Panc1 (cell line): ENCODE measurements at regions of chr19 and their contacts with region 1.

Region 1: DNA sequence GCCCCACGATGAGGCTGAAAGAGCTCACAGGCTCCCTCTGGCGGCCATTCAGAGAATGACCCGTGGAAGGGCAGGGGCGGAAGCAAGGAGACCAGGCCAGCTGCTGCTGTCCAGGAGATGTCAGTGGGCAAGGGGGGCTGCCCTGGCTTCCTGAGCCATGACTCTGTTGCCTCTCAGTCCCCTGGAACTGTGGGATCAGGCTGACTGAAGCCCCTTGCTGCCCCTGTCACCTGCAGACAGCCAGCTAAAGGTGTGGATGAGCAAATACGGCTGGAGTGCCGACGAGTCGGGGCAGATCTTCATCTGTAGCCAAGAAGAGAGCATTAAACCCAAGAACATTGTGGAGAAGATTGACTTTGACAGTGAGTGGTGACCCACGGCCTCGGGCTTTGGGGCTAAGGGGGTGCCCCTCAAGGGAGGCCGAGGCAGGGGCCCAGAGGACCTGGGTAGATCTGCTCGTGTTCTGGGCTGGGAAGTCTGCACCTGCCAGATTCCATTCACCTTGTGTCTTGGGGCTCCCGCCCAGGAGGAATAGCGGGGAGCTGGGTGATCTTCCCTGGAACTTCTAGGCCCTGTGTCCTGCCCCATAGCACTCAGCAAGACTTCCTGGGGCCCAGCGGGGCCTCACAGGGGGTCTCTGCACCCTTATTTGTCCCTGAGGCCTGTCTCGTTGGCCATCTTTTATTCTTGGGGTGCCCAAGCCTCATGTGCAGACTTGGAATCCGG is 12.5 kb upstream of the ACTN4 start:
- DNase-seq: no peak
- ATAC-seq: peak; percentile 73
- H3K4me3 ChIP-seq: no peak overlapping the region
- H3K27ac ChIP-seq: no peak overlapping the region
- H3K4me1 ChIP-seq: peaks cover 4% of the 10 kb centered on the region; the same call in 1 of the 2 replicates
- H3K27me3 ChIP-seq: no peaks in the 10 kb centered on the region
- CTCF ChIP-seq: no peak

Region 2: DNA sequence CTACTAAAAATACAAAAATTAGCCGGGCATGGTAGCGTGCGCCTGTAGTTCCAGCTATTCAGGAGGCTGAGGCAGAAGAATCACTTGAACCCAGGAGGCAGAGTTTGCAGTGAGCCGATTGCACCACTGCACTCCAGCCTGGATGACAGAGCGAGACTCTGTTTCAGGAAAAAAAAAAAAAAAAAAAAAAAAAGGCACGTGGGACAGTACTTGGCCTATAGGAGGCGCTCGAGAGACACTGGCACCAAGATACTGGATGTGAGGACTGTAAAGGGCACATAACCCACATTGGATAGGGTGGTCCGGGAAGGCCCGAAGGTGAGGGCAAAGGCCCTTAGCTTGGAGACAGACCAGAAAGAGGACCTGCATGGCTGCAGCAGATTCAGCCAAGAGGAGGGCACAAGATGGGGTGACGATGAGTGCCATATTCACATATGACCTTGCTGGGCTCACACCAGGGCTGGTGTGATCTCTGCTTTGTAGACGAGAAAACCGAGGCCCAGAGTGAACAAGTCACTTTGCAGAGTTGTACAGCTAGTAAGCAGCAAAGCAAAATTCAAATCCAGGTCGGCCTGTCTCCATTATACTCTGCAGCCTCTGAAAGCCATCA is 500.3 kb before region 1 on chr19:
- CTCF ChIA-PET with region 1: no interaction called
- POLR2A ChIA-PET with region 1: no interaction called
- in situ Hi-C with region 1: no loop called
- intact Hi-C with region 1: no loop called
- DNase-seq: peak; percentile 25
- ATAC-seq: peak; percentile 38; the same call in 1 of the 2 replicates
- H3K4me3 ChIP-seq: no peak overlapping the region
- H3K27ac ChIP-seq: no peak overlapping the region
- H3K4me1 ChIP-seq: no peaks in the 10 kb centered on the region
- H3K27me3 ChIP-seq: no peaks in the 10 kb centered on the region
- CTCF ChIP-seq: peak; percentile 96

Region 3: GRCh38 chr19:38506723-38507550 is 128.0 kb before region 1 on chr19:
- CTCF ChIA-PET with region 1: interaction called, 12 read pairs
- POLR2A ChIA-PET with region 1: interaction called, 3 read pairs
- in situ Hi-C with region 1: no loop called
- intact Hi-C with region 1: no loop called
- DNase-seq: peak; percentile 100
- ATAC-seq: peak; percentile 86
- H3K4me3 ChIP-seq: peak overlapping the region; percentile 29 to 64
- H3K27ac ChIP-seq: peak overlapping the region; percentile 58
- H3K4me1 ChIP-seq: peaks cover 8% of the 10 kb centered on the region
- H3K27me3 ChIP-seq: 0 out of 2 replicates have a peak, but pooled peaks cover 3% of the 10 kb centered on the region
- CTCF ChIP-seq: no peak

Region 4: DNA sequence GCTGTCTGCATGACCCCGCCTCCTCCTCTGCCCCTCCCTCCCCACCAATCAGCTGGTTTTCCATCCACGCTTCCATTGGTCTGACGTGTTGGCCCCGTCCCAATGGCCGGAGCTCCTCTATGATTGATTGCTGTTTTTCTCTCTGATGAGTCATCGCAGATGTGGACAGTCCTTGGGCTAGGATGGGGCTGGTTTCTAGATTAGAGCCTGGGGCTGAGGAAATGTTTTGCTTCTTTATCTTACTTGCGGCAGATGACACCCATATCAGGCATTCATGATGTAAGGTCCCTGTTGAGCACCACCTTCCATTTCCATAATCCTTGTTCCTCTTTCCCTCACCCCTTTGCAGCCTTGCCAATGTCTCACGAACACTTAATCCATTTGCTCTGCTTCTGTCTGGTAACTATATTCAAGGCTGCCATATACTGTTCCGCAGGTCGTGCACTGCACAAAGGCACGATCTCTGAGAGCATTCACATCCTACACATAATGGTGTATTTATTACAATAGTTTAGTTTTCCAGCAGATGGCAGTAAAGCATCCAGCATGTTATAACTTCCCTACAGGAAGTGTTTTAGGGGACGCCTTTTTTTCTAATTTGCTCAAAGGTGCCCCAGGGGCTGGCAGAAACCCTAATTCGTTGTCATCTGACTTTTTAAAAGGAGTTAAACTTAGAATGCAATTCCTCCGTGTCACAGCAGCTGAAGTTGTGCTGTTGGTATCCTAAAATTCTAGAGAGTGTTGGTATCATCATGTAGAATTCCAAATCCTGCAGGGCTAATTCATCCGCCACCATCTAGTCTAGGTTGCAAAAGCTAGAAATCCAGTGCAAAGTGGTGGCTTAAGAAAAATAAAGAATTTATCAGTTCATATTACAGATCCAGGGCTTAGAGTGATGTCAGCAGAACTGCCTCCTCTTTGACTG is 90.6 kb before region 1 on chr19:
- CTCF ChIA-PET with region 1: interaction called, 66 read pairs
- POLR2A ChIA-PET with region 1: interaction called, 4 read pairs
- in situ Hi-C with region 1: no loop called
- intact Hi-C with region 1: loop called (anchors 1 kb)
- DNase-seq: peak; percentile 95
- ATAC-seq: peak; percentile 93
- H3K4me3 ChIP-seq: peak overlapping the region; percentile 25 to 50
- H3K27ac ChIP-seq: peak overlapping the region; percentile 32
- H3K4me1 ChIP-seq: peaks cover 15% of the 10 kb centered on the region
- H3K27me3 ChIP-seq: peaks cover 3% of the 10 kb centered on the region; the same call in 1 of the 2 replicates
- CTCF ChIP-seq: no peak

Region 5: GRCh38 chr19:38564981-38565690 is 69.8 kb before region 1 on chr19:
- CTCF ChIA-PET with region 1: interaction called, 11 read pairs
- POLR2A ChIA-PET with region 1: interaction called, 4 read pairs
- in situ Hi-C with region 1: no loop called
- intact Hi-C with region 1: no loop called
- DNase-seq: no peak
- ATAC-seq: peak; percentile 83
- H3K4me3 ChIP-seq: peak overlapping the region; percentile 30 to 43
- H3K27ac ChIP-seq: peak overlapping the region; percentile 32
- H3K4me1 ChIP-seq: peaks cover 7% of the 10 kb centered on the region; the same call in 1 of the 2 replicates
- H3K27me3 ChIP-seq: no peaks in the 10 kb centered on the region
- CTCF ChIP-seq: no peak

Region 6: GRCh38 chr19:38587562-38587961 is 47.4 kb before region 1 on chr19:
- CTCF ChIA-PET with region 1: no interaction called
- POLR2A ChIA-PET with region 1: no interaction called
- in situ Hi-C with region 1: no loop called
- intact Hi-C with region 1: no loop called
- DNase-seq: no peak
- ATAC-seq: no peak
- H3K4me3 ChIP-seq: no peak overlapping the region
- H3K27ac ChIP-seq: no peak overlapping the region
- H3K4me1 ChIP-seq: no peaks in the 10 kb centered on the region
- H3K27me3 ChIP-seq: no peaks in the 10 kb centered on the region
- CTCF ChIP-seq: no peak

Region 7: DNA sequence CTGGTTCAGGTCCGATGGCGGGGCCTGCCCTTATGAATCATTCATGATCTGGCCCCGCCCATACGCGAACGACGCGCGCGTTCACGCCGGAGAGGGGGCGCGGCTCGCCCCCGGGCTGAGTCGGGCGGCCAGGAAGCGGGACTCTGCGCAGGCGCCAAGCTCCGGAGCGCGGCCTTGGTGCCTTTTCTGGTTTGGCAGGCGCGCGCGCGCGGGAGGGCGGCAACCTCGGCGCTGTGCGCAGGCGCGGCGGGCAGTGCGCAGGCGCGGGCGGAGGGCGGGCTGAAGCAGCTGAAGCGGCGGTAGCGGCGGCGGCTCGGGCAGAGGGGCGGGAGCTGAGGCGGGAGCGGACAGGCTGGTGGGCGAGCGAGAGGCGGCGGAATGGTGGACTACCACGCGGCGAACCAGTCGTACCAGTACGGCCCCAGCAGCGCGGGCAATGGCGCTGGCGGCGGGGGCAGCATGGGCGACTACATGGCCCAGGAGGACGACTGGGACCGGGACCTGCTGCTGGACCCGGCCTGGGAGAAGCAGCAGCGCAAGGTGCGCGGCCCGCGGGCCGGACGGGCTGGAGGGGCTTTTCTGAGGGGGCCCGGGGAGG is 12.5 kb after region 1 on chr19 and contains the start of gene ACTN4:
- CTCF ChIA-PET with region 1: interaction called, 22 read pairs
- POLR2A ChIA-PET with region 1: interaction called, 6 read pairs
- in situ Hi-C with region 1: no loop called
- intact Hi-C with region 1: no loop called
- DNase-seq: peak; percentile 100
- ATAC-seq: peak; percentile 83
- H3K4me3 ChIP-seq: peak within 1 kb of the TSS; percentile 50 to 68
- H3K27ac ChIP-seq: peak within 1 kb of the TSS; percentile 96
- H3K4me1 ChIP-seq: peaks cover 16% of the 10 kb centered on the region
- H3K27me3 ChIP-seq: no peaks in the 10 kb centered on the region
- CTCF ChIP-seq: no peak
- total RNA-seq, gene ACTN4: 3,297 TPM

Region 8: DNA sequence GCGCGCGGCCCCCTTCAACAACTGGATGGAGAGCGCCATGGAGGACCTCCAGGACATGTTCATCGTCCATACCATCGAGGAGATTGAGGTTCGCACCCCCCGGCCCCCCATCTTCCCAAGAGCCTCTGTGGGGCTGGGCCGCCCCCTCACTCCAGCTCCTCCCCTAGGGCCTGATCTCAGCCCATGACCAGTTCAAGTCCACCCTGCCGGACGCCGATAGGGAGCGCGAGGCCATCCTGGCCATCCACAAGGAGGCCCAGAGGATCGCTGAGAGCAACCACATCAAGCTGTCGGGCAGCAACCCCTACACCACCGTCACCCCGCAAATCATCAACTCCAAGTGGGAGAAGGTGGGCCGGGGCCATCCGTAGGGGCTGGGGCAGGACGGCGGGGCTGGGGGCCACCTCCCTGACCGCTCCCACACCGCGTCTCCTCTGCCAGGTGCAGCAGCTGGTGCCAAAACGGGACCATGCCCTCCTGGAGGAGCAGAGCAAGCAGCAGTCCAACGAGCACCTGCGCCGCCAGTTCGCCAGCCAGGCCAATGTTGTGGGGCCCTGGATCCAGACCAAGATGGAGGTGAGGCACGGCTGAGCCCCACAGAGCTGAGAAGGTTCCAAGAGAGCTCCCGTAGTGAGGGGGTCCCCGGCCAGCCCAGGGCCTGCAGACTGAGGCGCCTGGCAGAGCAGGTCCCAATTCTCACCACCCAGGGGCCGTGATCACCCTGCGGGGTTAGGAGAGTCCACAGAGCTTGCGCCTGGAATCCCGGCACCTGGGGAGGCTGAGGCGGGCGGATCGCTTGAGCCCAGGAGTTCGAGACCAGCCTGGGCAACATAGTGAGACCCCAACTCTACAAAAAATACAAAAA is 89.3 kb after region 1 on chr19:
- CTCF ChIA-PET with region 1: interaction called, 11 read pairs
- POLR2A ChIA-PET with region 1: no interaction called
- in situ Hi-C with region 1: no loop called
- intact Hi-C with region 1: no loop called
- DNase-seq: no peak
- ATAC-seq: no peak
- H3K4me3 ChIP-seq: no peak overlapping the region
- H3K27ac ChIP-seq: peak overlapping the region; percentile 74; the same call in 1 of the 2 replicates
- H3K4me1 ChIP-seq: peaks cover 90% of the 10 kb centered on the region
- H3K27me3 ChIP-seq: no peaks in the 10 kb centered on the region
- CTCF ChIP-seq: no peak

Region 9: GRCh38 chr19:40285353-40286234 is 1650.7 kb after region 1 on chr19:
- CTCF ChIA-PET with region 1: interaction called, 10 read pairs
- POLR2A ChIA-PET with region 1: interaction called, 3 read pairs
- in situ Hi-C with region 1: no loop called
- intact Hi-C with region 1: no loop called
- DNase-seq: peak; percentile 100
- ATAC-seq: peak; percentile 96
- H3K4me3 ChIP-seq: peak overlapping the region; percentile 36 to 47
- H3K27ac ChIP-seq: peak overlapping the region; percentile 89
- H3K4me1 ChIP-seq: peaks cover 51% of the 10 kb centered on the region
- H3K27me3 ChIP-seq: no peaks in the 10 kb centered on the region
- CTCF ChIP-seq: no peak